ENCODE measurements at regions of chr12 and their contacts with region 1.

Region 1: DNA sequence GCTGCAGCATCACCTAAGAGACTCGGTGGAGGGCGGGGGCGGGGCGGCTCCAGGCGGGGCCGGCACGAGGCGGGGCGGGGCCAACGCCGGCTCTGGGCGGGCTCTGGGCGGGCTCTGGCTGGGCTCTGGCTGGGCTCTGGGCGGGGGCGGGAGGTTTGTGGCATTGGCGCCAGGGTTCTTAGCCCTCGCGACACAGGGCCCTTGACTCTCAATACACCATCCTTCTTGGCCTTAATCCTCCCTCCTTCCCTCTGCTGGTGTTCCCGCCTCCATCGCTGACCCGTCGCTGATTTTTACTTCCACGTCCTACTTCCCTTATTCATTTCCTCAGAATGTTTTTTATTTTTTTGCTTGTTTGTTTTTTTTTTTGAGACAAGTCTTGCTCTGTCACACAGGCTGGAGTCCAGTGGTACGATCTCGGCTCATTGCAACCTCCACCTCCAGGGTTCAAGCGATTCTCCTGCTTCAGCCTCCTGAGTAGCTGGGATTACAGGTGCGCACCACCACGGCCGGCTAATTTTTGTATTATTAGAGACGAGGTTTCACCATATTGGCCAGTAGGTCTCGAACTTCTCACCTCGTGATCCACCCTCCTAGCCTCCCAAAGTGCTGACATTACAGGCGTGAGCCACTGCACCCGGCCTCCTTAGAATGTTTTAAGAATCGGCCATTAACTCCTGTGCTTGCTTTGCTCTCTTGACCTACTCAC is at the start of gene BLTP3B:
- H3K4me3 Mint-ChIP-seq: peak within 1 kb of the TSS; percentile 99
- H3K27ac Mint-ChIP-seq: peak within 1 kb of the TSS; percentile 98
- H3K4me1 Mint-ChIP-seq: peaks cover 37% of the 10 kb centered on the region
- H3K27me3 Mint-ChIP-seq: no peaks in the 10 kb centered on the region

Region 2: GRCh38 chr12:100200463-100201181 is 57.6 kb after region 1 on chr12 and contains the start of gene ACTR6:
- intact Hi-C with region 1: loop called (anchors 5 kb)
- H3K4me3 Mint-ChIP-seq: peak within 1 kb of the TSS; percentile 90
- H3K27ac Mint-ChIP-seq: peak within 1 kb of the TSS; percentile 93
- H3K4me1 Mint-ChIP-seq: peaks cover 13% of the 10 kb centered on the region
- H3K27me3 Mint-ChIP-seq: peaks cover 11% of the 10 kb centered on the region

Region 3: GRCh38 chr12:100234598-100235304 is 91.7 kb after region 1 on chr12:
- intact Hi-C with region 1: no loop called
- H3K4me3 Mint-ChIP-seq: no peak overlapping the region
- H3K27ac Mint-ChIP-seq: no peak overlapping the region
- H3K4me1 Mint-ChIP-seq: peaks cover 5% of the 10 kb centered on the region
- H3K27me3 Mint-ChIP-seq: no peaks in the 10 kb centered on the region

Region 4: GRCh38 chr12:100365411-100365810 is 222.4 kb after region 1 on chr12:
- intact Hi-C with region 1: no loop called
- H3K4me3 Mint-ChIP-seq: no peak overlapping the region
- H3K27ac Mint-ChIP-seq: no peak overlapping the region
- H3K4me1 Mint-ChIP-seq: no peaks in the 10 kb centered on the region
- H3K27me3 Mint-ChIP-seq: no peaks in the 10 kb centered on the region

Region 5: GRCh38 chr12:100573292-100574186 is 430.5 kb after region 1 on chr12 and contains the start of gene GAS2L3:
- intact Hi-C with region 1: loop called (anchors 10 kb)
- H3K4me3 Mint-ChIP-seq: peak within 1 kb of the TSS; percentile 95
- H3K27ac Mint-ChIP-seq: peak within 1 kb of the TSS; percentile 97
- H3K4me1 Mint-ChIP-seq: peaks cover 38% of the 10 kb centered on the region
- H3K27me3 Mint-ChIP-seq: no peaks in the 10 kb centered on the region